ENCODE measurements at regions of chr3 and their contacts with region 1.

Region 1: DNA sequence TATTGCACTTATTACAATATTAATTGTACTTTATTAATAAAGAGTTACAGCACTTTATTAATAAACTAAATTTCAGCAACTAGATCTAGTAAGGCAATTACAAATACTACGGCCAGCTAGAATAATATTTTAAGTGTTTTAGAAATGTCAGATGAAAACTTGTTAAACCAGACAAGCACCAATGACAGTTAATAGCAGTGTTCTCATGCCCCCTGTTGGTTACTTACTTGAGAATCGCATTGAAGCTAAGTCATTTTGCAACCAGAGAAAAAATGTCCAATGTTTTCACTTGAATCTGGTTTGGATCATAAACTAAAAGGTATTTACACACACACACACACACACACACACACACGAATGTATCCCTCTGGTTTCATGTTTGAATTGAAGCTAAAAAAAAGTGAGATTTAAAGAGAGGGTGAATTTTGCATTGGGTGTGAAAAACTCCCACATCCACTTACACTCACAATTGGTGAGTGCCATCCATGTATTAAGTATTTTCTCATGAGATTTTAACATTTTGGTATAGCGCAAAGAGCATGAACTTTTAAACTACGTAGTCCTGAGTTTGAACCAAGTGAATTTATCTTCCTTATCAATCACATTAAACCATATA is 347.7 kb downstream of the ZBBX start:
- DNase-seq: peak; percentile 41
- H3K4me3 ChIP-seq: no peak overlapping the region
- H3K27ac ChIP-seq: no peak overlapping the region
- H3K27me3 ChIP-seq: no peaks in the 10 kb centered on the region
- CTCF ChIP-seq: peak; percentile 67

Region 2: GRCh38 chr3:166013073-166013679 is 1019.2 kb before region 1 on chr3:
- CTCF ChIA-PET with region 1: interaction called, 42 read pairs
- POLR2A ChIA-PET with region 1: no interaction called
- DNase-seq: peak; percentile 15
- H3K4me3 ChIP-seq: no peak overlapping the region
- H3K27ac ChIP-seq: no peak overlapping the region
- H3K27me3 ChIP-seq: no peaks in the 10 kb centered on the region
- CTCF ChIP-seq: peak; percentile 53

Region 3: GRCh38 chr3:166837535-166837934 is 194.8 kb before region 1 on chr3:
- CTCF ChIA-PET with region 1: interaction called, 31 read pairs
- POLR2A ChIA-PET with region 1: no interaction called
- DNase-seq: no peak
- H3K4me3 ChIP-seq: no peak overlapping the region
- H3K27ac ChIP-seq: no peak overlapping the region
- H3K27me3 ChIP-seq: no peaks in the 10 kb centered on the region
- CTCF ChIP-seq: peak; percentile 40

Region 4: GRCh38 chr3:167304077-167304476 is 271.7 kb after region 1 on chr3:
- CTCF ChIA-PET with region 1: no interaction called
- POLR2A ChIA-PET with region 1: no interaction called
- DNase-seq: no peak
- H3K4me3 ChIP-seq: no peak overlapping the region
- H3K27ac ChIP-seq: no peak overlapping the region
- H3K27me3 ChIP-seq: no peaks in the 10 kb centered on the region
- CTCF ChIP-seq: no peak

Measured in AG04450 (cell line).